Prostate gland (tissue), 2 donors: ENCODE measurements at regions of chr2 and their contacts with region 1.

Region 1: GRCh38 chr2:12931186-12931844 is 214.6 kb downstream of the TRIB2 start:
- DNase-seq: peak; percentile 10
- H3K4me3 ChIP-seq: no peak overlapping the region
- H3K27ac ChIP-seq: no peak overlapping the region
- H3K4me1 ChIP-seq: no peaks in the 10 kb centered on the region
- H3K27me3 ChIP-seq: no peaks in the 10 kb centered on the region
- CTCF ChIP-seq: peak; percentile 46 to 85 (median 80)
- POLR2A ChIP-seq: no peak

Region 2: GRCh38 chr2:11829947-11830707 is 1101.2 kb before region 1 on chr2:
- intact Hi-C with region 1: loop called (anchors 5 kb)
- DNase-seq: peak; percentile 79
- H3K4me3 ChIP-seq: peak overlapping the region; percentile 5 to 17
- H3K27ac ChIP-seq: peak overlapping the region; percentile 54 to 67
- H3K4me1 ChIP-seq: peaks cover 6% of the 10 kb centered on the region
- H3K27me3 ChIP-seq: no peaks in the 10 kb centered on the region
- CTCF ChIP-seq: peak in 2 of 4 experiments; percentile 45 to 49
- POLR2A ChIP-seq: no peak

Region 3: GRCh38 chr2:11863513-11864328 is 1067.6 kb before region 1 on chr2:
- intact Hi-C with region 1: loop called (anchors 10 kb)
- DNase-seq: peak; percentile 81
- H3K4me3 ChIP-seq: no peak overlapping the region
- H3K27ac ChIP-seq: no peak overlapping the region
- H3K4me1 ChIP-seq: no peaks in the 10 kb centered on the region
- H3K27me3 ChIP-seq: no peaks in the 10 kb centered on the region
- CTCF ChIP-seq: peak; percentile 91 to 95 (median 94)
- POLR2A ChIP-seq: no peak

Region 4: GRCh38 chr2:12555012-12555645 is 376.2 kb before region 1 on chr2:
- intact Hi-C with region 1: loop called (anchors 10 kb)
- DNase-seq: no peak
- H3K4me3 ChIP-seq: no peak overlapping the region
- H3K27ac ChIP-seq: no peak overlapping the region
- H3K4me1 ChIP-seq: no peaks in the 10 kb centered on the region
- H3K27me3 ChIP-seq: no peaks in the 10 kb centered on the region
- CTCF ChIP-seq: no peak
- POLR2A ChIP-seq: no peak

Region 5: DNA sequence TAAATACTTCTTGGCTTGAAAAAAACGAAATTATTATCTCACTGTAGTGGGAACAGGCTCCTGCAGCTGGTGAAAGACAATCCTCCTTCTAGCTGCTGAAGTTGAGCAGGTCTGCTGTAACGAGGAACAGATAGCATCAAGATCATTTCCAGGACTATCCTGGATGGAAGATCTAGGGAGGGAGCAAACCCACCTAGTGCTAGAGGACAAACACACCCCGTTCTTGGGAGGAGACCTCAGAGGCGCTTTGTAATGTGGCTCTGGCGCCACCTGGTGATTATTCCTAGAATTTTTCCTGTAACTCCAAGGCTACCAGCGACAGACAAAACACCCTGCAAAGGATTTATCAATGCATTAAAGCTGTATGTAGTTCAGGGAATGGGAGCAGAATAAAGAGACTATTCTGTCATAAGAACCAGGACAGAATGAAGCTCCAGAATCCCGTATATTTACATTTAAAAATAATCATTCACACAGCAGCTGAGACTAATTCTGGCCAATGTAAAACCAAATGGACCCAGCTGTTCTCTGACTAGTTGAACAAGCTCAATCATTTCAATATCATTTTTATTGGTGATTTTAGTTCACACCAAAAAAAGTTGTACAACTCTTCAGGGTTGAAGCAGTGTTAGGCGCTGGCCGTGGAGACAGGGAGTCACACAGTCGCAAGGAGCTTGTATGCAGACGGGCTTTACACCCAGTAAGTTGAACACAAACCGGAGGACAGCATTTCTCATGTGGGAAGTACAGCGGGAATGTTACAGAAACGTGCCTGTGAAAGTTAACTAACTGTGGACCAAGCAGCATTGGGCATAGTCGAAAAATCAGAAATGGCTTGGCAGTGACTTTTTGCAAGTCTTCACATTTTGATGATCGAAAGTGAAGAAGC is 75.8 kb after region 1 on chr2:
- intact Hi-C with region 1: loop called (anchors 5 kb)
- DNase-seq: peak; percentile 58
- H3K4me3 ChIP-seq: no peak overlapping the region
- H3K27ac ChIP-seq: no peak overlapping the region
- H3K4me1 ChIP-seq: no peaks in the 10 kb centered on the region
- H3K27me3 ChIP-seq: no peaks in the 10 kb centered on the region
- CTCF ChIP-seq: peak; percentile 56 to 84 (median 78)
- POLR2A ChIP-seq: no peak

Region 6: GRCh38 chr2:13413989-13414388 is 482.7 kb after region 1 on chr2:
- intact Hi-C with region 1: no loop called
- DNase-seq: no peak
- H3K4me3 ChIP-seq: no peak overlapping the region
- H3K27ac ChIP-seq: no peak overlapping the region
- H3K4me1 ChIP-seq: no peaks in the 10 kb centered on the region
- H3K27me3 ChIP-seq: no peaks in the 10 kb centered on the region
- CTCF ChIP-seq: no peak
- POLR2A ChIP-seq: no peak